Activated CD8-positive, alpha-beta T cell treated with anti-CD3 and anti-CD28 coated beads for 36 hours (primary cell): ENCODE measurements at regions of chr9 and their contacts with region 1.

Region 1: DNA sequence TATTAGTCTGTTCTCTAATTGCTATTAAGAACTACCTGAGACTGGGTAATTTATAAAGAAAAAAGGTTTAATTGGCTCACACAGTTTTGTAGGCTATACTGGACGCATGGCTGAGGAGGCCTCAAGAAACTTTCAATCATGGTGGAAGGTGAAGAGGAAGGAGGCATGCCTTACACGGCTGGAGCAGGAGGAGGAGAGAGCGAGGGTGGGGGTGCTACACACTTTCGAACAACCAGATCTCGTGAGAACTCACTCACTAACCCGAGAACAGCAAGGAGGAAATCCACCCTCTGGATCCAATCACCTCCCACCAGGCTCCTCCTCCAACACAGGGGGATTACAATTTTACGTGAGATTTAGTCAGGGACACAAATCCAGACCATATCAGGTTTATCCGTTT is 90.0 kb downstream of the RMI1 start:
- DNase-seq: no peak
- ATAC-seq: no peak
- H3K4me3 Mint-ChIP-seq: no peak overlapping the region
- H3K27ac Mint-ChIP-seq: no peak overlapping the region
- H3K4me1 Mint-ChIP-seq: no peaks in the 10 kb centered on the region
- H3K27me3 Mint-ChIP-seq: no peaks in the 10 kb centered on the region
- CTCF ChIP-seq: no peak

Region 2: GRCh38 chr9:83956434-83957247 is 113.9 kb before region 1 on chr9:
- CTCF ChIA-PET with region 1: no interaction called
- POLR2A ChIA-PET with region 1: no interaction called
- intact Hi-C with region 1: no loop called
- DNase-seq: peak; percentile 76
- ATAC-seq: peak; percentile 81
- H3K4me3 Mint-ChIP-seq: peak overlapping the region; percentile 97
- H3K27ac Mint-ChIP-seq: peak overlapping the region; percentile 97
- H3K4me1 Mint-ChIP-seq: peaks cover 9% of the 10 kb centered on the region
- H3K27me3 Mint-ChIP-seq: no peaks in the 10 kb centered on the region
- CTCF ChIP-seq: no peak

Region 3: DNA sequence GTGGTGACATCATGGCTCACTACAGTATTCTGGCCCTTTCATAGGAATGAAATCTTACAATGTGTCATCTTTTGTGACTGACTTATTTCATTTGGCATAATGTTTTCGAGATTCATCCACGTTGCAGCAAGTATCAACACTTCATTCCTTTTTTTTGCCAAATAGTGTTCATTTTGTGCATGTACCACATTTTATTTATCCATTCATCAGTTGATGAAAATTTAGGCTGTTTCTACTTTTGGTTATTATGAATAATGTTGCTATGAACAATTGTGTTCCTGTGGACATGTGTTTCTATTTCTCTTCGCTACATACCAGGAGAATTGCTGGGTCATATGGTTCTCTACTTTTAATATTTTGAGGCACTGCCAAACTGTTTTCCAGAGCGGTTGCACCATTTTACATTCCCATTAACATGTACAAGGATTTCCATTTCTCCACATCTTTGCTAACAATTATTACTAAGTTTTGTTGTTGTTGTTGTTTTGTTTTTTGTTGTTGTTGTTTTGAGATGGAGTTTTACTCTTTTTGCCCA is 46.5 kb before region 1 on chr9:
- CTCF ChIA-PET with region 1: no interaction called
- POLR2A ChIA-PET with region 1: no interaction called
- intact Hi-C with region 1: loop called (anchors 10 kb)
- DNase-seq: no peak
- ATAC-seq: no peak
- H3K4me3 Mint-ChIP-seq: no peak overlapping the region
- H3K27ac Mint-ChIP-seq: no peak overlapping the region
- H3K4me1 Mint-ChIP-seq: no peaks in the 10 kb centered on the region
- H3K27me3 Mint-ChIP-seq: peaks cover 7% of the 10 kb centered on the region
- CTCF ChIP-seq: no peak